PC-9 (cell line): ENCODE measurements at regions of chr10 and their contacts with region 1.

Region 1: DNA sequence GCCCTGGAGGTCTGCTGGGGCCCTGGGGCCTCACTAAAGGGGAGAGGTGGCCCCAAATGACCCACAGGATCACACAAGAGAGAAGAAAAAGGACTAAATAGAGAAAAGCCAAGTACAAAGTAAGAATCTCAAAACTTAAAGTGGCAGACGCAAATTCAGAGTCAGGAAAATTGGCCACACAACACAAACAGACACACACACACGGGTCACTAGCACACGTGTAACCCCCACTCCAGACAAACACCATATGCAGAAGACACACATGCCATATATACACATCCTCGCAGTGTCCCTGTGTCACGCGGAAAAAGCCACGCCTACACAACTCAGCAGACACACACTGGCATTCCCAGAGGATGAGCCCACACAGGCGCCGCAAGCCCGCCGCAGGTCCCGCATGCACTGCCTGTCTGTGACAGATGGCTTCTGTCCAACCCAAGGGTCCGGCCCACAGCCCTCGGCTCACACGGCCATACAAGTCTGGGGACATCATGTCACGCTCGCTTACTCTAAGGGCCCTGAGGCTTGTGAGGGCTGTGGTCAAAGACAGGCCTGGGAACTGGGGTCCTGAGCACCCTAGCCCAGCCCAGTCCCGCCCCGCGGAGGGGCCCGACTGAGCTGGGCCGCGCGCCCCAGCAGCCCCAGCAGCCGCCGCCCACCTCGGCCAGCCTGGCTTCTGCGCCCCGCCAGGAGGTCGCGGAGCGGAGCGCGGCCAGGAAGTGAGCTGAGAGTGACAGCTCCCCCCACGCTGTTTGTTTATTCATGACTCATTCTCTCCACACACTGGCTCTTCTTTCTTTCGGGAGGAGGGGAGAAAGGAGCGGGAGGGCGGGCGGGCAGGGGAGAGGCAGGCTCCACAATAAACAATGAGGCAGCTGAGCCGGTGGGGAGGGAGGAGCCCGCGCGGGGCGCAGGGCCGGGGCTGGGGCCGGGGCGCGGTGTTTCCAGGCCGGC is 95.5 kb upstream of the ZMIZ1 start:
- DNase-seq: peak; percentile 89 to 93
- H3K4me3 ChIP-seq: peak overlapping the region; percentile 59
- H3K27ac ChIP-seq: peak overlapping the region; percentile 94
- H3K4me1 ChIP-seq: peaks cover 58% of the 10 kb centered on the region
- H3K27me3 ChIP-seq: no peaks in the 10 kb centered on the region
- CTCF ChIP-seq: no peak

Region 2: DNA sequence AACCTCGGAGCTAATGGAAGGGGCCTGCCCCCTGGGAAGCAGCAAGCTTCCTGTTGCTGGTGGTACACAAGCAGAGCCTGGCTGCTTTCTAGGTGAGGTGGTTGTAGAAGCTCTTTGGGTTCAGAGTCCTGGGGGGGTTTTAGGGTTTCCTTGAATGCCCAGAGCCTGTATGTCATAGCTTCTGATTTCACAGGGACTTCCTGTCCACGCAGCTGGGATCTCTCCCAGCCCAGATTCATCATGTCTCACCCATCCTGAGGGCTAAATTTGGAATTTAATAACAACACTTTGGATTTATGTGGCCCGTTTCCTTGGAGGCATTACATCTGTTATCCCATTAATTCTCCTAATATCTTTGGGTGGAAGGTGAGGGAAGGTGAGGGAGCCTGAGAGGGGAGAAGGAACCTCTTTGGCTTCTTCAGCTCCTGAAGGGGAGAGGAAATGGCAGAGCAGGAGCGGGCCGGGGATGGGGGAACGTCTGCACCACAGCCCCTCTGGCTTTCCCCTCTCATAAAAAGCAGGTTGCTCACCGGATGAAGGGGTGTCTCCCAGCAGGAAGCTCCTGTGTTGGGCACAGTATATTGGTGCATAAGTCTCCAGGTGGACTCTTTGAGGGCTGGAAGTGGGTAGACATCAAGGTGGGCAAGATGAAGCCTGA is 919.9 kb before region 1 on chr10:
- CTCF ChIA-PET with region 1: no interaction called
- POLR2A ChIA-PET with region 1: interaction called, 17 read pairs
- intact Hi-C with region 1: loop called (anchors 5 kb)
- DNase-seq: no peak
- H3K4me3 ChIP-seq: no peak overlapping the region
- H3K27ac ChIP-seq: no peak overlapping the region
- H3K4me1 ChIP-seq: no peaks in the 10 kb centered on the region
- H3K27me3 ChIP-seq: no peaks in the 10 kb centered on the region
- CTCF ChIP-seq: no peak

Region 3: DNA sequence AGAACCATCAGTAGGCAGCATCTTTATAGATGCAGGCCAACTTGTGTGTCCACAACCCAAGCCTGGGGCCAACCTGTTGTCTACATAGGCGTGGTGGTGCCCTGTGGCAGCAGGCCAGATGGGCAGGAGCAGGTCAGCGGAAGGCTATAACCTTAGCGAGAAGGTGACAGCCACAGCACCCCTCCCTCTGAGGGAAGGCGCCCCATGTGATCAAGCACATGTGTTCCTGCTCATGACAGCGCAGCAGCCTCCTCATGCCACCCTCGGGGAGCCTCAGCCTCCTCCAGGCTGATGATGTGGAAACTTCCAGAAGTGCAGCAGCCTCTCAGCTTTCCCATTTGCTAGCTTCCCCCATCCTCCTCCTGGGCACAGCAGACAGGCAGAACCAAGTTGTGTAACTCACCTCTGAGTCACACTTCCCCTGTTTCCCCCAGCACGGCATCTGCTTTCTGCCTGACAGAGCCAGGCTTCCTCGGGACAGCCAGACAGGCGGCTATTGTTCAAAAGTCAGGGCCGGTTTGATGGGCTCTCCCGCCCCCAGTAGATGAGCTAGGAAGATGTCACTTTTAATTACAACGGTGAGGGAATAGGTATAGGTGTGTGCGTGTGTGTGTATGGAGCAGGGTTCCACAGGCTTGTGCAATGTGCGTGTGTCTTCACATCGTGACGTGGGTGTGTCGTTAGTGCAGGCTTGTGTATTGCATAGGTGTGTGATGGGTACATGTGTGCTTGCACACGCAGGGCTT is 216.4 kb before region 1 on chr10:
- CTCF ChIA-PET with region 1: no interaction called
- POLR2A ChIA-PET with region 1: interaction called, 14 read pairs
- intact Hi-C with region 1: loop called (anchors 2 kb)
- DNase-seq: peak; percentile 86 to 96
- H3K4me3 ChIP-seq: 0 out of 2 replicates have a peak overlapping the region, but pooled peaks have one; percentile 3
- H3K27ac ChIP-seq: peak overlapping the region; percentile 41
- H3K4me1 ChIP-seq: peaks cover 32% of the 10 kb centered on the region
- H3K27me3 ChIP-seq: no peaks in the 10 kb centered on the region
- CTCF ChIP-seq: no peak

Region 4: GRCh38 chr10:78784546-78784945 is 188.7 kb before region 1 on chr10:
- CTCF ChIA-PET with region 1: interaction called, 11 read pairs
- POLR2A ChIA-PET with region 1: no interaction called
- intact Hi-C with region 1: loop called (anchors 1 kb)
- DNase-seq: no peak
- H3K4me3 ChIP-seq: no peak overlapping the region
- H3K27ac ChIP-seq: no peak overlapping the region
- H3K4me1 ChIP-seq: peaks cover 2% of the 10 kb centered on the region; the same call in 1 of the 2 replicates
- H3K27me3 ChIP-seq: no peaks in the 10 kb centered on the region
- CTCF ChIP-seq: no peak

Region 5: DNA sequence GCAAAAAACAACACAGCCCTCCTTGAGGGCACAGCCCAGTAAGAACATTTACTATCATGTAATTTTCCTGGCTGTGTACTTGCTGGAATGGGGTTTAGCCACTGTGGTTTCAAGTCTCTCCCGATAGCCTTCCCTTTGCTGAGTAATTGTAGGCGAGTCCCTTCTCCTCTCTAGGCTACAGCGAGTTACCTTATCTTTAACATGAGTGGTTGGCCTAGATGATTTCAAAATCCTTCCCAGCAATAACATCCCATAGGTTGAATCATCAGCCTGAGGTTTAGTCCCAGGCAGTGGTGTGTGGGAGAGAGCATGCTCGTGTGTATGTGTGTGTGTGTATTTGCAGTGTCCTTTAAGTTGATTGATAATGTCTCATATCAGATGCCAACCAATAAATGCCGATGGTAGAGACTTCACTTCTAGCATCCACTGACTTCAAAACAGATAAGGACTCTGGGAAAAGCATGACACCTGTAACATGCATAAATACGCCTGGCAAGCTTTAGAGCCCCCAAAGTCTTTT is 47.4 kb before region 1 on chr10:
- CTCF ChIA-PET with region 1: no interaction called
- POLR2A ChIA-PET with region 1: interaction called, 4 read pairs
- intact Hi-C with region 1: loop called (anchors 1 kb)
- DNase-seq: peak; percentile 56 to 97
- H3K4me3 ChIP-seq: no peak overlapping the region
- H3K27ac ChIP-seq: peak overlapping the region; percentile 88
- H3K4me1 ChIP-seq: peaks cover 79% of the 10 kb centered on the region
- H3K27me3 ChIP-seq: no peaks in the 10 kb centered on the region
- CTCF ChIP-seq: no peak